ENCODE measurements at regions of chr10 and their contacts with region 1.

Region 1: GRCh38 chr10:13099666-13100348 is at the start of gene OPTN:
- DNase-seq: peak; percentile 61 to 83
- ATAC-seq: peak; percentile 55
- H3K4me3 ChIP-seq: peak within 1 kb of the TSS; percentile 78 to 94 (median 88)
- H3K27ac ChIP-seq: peak within 1 kb of the TSS; percentile 96 to 99 (median 98)
- H3K4me1 ChIP-seq: peaks cover 31 to 32% of the 10 kb centered on the region in 2 donors
- H3K27me3 ChIP-seq: no peaks in the 10 kb centered on the region
- CTCF ChIP-seq: peak; percentile 79 to 88 (median 83)
- POLR2A ChIP-seq: peak; percentile 94 to 95
- total RNA-seq, gene OPTN: 295 to 592 (median 527) TPM

Region 2: GRCh38 chr10:12214763-12215218 is 885.0 kb before region 1 on chr10:
- in situ Hi-C with region 1: loop called in 1 of 4 experiments (anchors 25 kb)
- intact Hi-C with region 1: no loop called
- DNase-seq: no peak
- ATAC-seq: no peak
- H3K4me3 ChIP-seq: peak overlapping the region in 3 of 4 donors; percentile 9 to 29 (median 14)
- H3K27ac ChIP-seq: peak overlapping the region in 1 of 4 donors; percentile 27
- H3K4me1 ChIP-seq: peaks cover 11 to 16% of the 10 kb centered on the region in 2 donors
- H3K27me3 ChIP-seq: no peaks in the 10 kb centered on the region
- CTCF ChIP-seq: peak in 4 of 5 experiments; percentile 21 to 61 (median 35)
- POLR2A ChIP-seq: no peak

Region 3: GRCh38 chr10:12720217-12720981 is 379.4 kb before region 1 on chr10:
- in situ Hi-C with region 1: no loop called
- intact Hi-C with region 1: loop called (anchors 2 kb)
- DNase-seq: peak; percentile 73 to 85
- ATAC-seq: peak; percentile 96 to 97
- H3K4me3 ChIP-seq: no peak overlapping the region
- H3K27ac ChIP-seq: peak overlapping the region; percentile 77 to 85 (median 80)
- H3K4me1 ChIP-seq: peaks cover 5 to 19% of the 10 kb centered on the region in 2 donors
- H3K27me3 ChIP-seq: no peaks in the 10 kb centered on the region
- CTCF ChIP-seq: no peak
- POLR2A ChIP-seq: no peak

Region 4: DNA sequence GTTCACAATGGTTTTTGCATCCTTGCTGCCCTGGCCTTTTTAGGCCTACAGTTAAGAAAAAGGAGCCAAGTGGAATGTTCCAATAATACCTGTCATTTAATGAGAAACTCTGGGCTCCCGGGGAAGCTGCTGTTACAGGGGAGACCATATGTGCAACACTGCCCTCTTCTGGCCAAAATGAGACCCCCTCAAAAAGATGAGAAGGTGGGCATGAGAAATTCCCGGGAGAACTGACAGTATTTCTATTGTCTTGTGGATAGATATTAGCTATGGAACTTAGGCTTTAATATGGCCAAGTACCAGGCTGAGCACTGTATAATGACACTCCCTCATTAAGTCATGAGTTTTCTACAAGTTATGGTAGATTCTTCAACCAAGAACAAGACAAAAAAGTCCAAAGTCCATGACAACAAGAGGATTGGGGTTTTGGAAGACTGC is 197.7 kb before region 1 on chr10:
- in situ Hi-C with region 1: loop called in 1 of 4 experiments (anchors 25 kb)
- intact Hi-C with region 1: loop called (anchors 2 kb)
- DNase-seq: no peak
- ATAC-seq: no peak
- H3K4me3 ChIP-seq: no peak overlapping the region
- H3K27ac ChIP-seq: no peak overlapping the region
- H3K4me1 ChIP-seq: no peaks in the 10 kb centered on the region
- H3K27me3 ChIP-seq: no peaks in the 10 kb centered on the region
- CTCF ChIP-seq: peak; percentile 20 to 75 (median 63)
- POLR2A ChIP-seq: no peak

Region 5: DNA sequence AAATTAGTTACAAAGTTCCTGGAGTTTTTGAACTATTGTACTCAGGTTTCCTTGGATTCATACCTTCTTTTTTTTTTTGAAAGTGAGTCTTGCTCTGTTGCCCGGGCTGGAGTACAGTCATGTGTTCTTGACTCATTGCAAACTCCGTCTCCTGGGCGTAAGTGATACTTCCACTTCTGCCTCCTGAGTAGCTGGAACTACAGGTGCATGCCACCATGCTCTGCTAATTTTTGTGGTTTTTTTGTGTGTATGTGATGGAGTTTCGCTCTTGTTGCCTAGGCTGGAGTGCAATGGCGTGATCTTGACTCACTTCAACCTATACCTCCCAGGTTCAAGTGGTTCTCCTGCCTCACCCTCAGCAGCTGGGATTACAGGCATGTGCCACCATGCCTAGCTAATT is 83.8 kb after region 1 on chr10:
- in situ Hi-C with region 1: no loop called
- intact Hi-C with region 1: loop called (anchors 1 kb)
- DNase-seq: no peak
- ATAC-seq: no peak
- H3K4me3 ChIP-seq: no peak overlapping the region
- H3K27ac ChIP-seq: peak overlapping the region in 3 of 4 donors; percentile 67 to 87 (median 80)
- H3K4me1 ChIP-seq: peaks cover 17 to 23% of the 10 kb centered on the region in 2 donors
- H3K27me3 ChIP-seq: no peaks in the 10 kb centered on the region
- CTCF ChIP-seq: no peak
- POLR2A ChIP-seq: no peak

Region 6: DNA sequence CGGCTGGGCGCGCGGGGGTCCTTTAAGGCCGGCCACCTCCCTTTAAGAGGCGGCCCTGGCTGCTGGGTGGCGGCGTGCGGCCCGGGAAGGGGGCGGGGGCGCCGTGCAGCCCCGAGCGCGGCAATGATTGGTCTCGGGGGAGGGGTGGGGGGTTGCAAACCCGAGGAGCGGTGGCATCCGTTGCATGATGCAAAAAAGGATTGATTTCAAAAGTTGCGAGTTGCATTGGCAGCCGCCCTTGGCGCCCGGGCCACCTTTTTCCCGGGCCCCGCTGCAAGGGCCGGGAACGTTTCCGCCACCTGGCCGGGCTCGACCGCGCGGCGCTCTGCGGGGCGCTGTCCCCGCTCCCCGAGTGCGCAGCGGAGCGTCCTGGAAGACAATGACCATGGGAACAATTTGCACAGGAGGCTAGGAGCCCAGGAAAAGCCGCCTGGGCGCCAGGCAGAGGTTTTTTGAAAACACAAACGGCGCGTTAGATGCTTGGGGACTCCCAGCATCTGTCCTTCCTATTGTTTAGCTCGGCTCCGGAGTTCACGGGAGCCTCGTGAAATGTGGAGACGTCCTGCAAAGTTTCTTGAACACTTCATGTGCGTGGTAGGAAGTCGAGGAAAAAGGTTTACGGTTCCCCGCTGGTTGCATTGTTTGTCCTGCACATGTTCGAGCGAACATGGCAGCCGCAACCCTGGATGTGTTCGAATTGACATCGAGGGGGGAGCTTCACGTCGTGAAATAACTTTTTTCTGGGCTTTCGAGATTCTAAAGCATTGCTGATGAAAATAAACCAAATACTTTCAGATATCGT is 248.6 kb after region 1 on chr10 and contains the start of gene SEPHS1:
- in situ Hi-C with region 1: no loop called
- intact Hi-C with region 1: loop called (anchors 5 kb)
- DNase-seq: peak; percentile 76 to 88
- ATAC-seq: peak; percentile 81 to 83
- H3K4me3 ChIP-seq: peak within 1 kb of the TSS; percentile 72 to 88 (median 83)
- H3K27ac ChIP-seq: peak within 1 kb of the TSS; percentile 85 to 97 (median 94)
- H3K4me1 ChIP-seq: peaks cover 24 to 25% of the 10 kb centered on the region in 2 donors
- H3K27me3 ChIP-seq: peaks cover 0 to 13% (median 10%) of the 10 kb centered on the region in 3 donors
- CTCF ChIP-seq: peak in 1 of 5 experiments; percentile 31
- POLR2A ChIP-seq: no peak
- total RNA-seq, gene SEPHS1: 22.4 to 29.7 (median 27.9) TPM

Measured in gastrocnemius medialis (tissue), 4 donors.